ENCODE measurements at regions of chr4 and their contacts with region 1.

Region 1: GRCh38 chr4:77600521-77601451 is 4.8 kb upstream of the CXCL13 start:
- DNase-seq: peak; percentile 53
- ATAC-seq: peak; percentile 51
- H3K4me3 Mint-ChIP-seq: no peak overlapping the region
- H3K27ac Mint-ChIP-seq: no peak overlapping the region
- H3K4me1 Mint-ChIP-seq: peaks cover 13% of the 10 kb centered on the region
- H3K27me3 Mint-ChIP-seq: peaks cover 30% of the 10 kb centered on the region

Region 2: DNA sequence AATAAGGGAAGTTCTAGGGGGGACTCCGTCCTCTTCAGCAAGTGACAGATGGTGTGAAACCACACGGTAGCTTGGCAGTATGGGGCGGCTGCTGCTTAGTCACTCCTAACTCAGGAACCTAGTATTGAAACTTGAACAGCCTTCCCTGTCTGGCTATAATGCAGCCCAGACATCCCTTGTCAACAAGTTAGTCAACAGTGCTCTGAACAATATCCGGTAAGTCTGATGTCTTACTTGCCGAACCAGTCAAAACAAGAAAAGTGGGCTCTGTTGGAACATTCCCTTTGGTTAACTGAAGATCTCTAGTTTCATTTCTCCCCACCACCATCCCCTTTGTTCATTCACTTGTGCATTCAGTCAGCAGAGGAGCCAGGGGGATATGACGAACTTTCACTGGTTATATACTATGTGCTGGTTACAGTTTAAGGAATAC is 13.8 kb before region 1 on chr4:
- CTCF ChIA-PET with region 1: interaction called, 13 read pairs
- DNase-seq: peak; percentile 89
- ATAC-seq: peak; percentile 98
- H3K4me3 Mint-ChIP-seq: peak overlapping the region; percentile 14
- H3K27ac Mint-ChIP-seq: peak overlapping the region; percentile 75
- H3K4me1 Mint-ChIP-seq: peaks cover 39% of the 10 kb centered on the region
- H3K27me3 Mint-ChIP-seq: peaks cover 22% of the 10 kb centered on the region

Region 3: DNA sequence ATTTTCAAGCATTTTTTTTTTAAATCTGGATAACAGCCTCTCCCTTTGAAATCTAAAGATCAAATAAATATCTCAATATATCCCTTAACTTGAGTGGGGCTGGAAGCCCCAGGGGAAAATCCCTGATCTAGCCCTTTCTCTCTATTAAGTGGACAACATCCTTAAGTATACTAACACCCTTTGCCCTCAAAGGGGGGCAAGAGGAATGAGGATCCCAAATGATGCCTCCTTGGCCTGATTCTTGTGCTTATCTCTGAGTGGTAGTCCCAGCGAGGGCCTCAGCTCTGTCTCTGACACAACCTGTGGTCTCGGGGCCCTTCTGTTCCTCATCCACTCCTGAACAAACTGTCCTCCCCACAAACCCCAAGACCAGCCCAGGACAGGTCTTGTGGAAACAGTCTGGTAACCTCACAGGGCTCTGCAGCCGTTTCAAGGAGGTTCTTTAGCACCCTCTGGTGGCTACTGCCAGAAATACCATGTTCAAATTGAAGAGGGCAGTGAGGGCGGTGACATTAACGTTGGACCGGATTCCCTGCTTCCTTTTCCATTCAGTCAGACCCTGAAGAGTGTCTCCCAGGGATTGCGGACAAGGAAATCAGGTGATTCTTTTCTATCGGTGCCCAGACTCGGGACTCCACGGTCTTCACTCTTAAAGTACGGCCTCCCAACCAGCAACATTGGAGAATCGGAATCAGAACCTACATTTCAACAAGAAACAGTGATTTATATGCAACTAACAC is 17.8 kb after region 1 on chr4:
- CTCF ChIA-PET with region 1: interaction called, 63 read pairs
- DNase-seq: peak; percentile 78
- ATAC-seq: peak; percentile 91
- H3K4me3 Mint-ChIP-seq: no peak overlapping the region
- H3K27ac Mint-ChIP-seq: no peak overlapping the region
- H3K4me1 Mint-ChIP-seq: peaks cover 13% of the 10 kb centered on the region
- H3K27me3 Mint-ChIP-seq: peaks cover 37% of the 10 kb centered on the region

Region 4: GRCh38 chr4:78174891-78175290 is 574.1 kb after region 1 on chr4:
- CTCF ChIA-PET with region 1: no interaction called
- DNase-seq: no peak
- ATAC-seq: no peak
- H3K4me3 Mint-ChIP-seq: no peak overlapping the region
- H3K27ac Mint-ChIP-seq: no peak overlapping the region
- H3K4me1 Mint-ChIP-seq: no peaks in the 10 kb centered on the region
- H3K27me3 Mint-ChIP-seq: no peaks in the 10 kb centered on the region

Measured in activated CD8-positive, alpha-beta memory T cell treated with anti-CD3 and anti-CD28 coated beads, Interleukin-2, amount 10 ng/mL, durations not matched to agents 7 days and 5 days (primary cell).